ENCODE measurements at regions of chr4 and their contacts with region 1.

Region 1: DNA sequence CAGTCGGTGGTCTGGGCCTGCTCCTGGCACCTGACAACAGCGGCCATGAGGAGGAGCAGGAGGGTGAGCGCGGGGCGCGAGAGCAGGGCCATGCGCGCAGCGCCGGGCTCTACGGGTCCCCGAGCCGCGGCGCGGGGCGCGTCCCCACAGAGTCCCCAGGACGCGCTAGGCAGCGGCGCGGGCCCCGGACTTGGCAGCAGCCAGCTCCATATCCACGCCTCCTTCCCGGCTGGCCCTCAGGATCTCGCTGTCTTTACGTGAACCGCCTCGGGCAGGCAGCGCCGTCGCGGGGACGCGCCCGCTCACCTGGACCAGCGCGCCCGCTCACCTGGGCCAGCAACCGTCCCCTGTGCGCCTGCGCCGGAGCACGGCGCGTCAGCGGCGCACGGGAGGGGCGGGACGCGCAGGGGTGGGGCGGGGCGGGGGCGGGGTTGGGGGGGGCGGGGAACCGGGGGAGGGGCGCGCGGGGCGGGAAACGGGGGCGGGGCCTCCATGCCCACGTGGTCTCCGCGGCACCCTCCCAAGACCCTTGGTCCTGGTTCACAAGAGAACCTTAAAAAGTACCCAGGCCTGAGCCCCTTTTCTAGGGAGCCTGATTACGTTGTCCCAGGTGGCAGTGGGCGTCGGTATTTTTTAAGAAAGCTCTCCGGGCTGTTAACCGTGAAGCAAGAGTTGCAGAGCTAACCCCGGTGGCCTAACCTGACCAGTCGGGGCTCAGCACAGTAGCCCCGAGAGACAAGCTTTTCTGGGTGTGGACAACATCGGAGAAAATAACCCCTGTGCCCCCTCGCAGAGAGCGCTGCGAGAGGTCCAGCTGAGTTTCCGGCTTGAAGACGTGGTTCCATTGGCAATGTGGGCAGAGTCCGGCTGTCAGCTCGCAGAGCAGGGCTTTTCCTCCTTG is at the start of gene PLA2G12A:
- DNase-seq: peak; percentile 37 to 93 (median 57)

Region 2: DNA sequence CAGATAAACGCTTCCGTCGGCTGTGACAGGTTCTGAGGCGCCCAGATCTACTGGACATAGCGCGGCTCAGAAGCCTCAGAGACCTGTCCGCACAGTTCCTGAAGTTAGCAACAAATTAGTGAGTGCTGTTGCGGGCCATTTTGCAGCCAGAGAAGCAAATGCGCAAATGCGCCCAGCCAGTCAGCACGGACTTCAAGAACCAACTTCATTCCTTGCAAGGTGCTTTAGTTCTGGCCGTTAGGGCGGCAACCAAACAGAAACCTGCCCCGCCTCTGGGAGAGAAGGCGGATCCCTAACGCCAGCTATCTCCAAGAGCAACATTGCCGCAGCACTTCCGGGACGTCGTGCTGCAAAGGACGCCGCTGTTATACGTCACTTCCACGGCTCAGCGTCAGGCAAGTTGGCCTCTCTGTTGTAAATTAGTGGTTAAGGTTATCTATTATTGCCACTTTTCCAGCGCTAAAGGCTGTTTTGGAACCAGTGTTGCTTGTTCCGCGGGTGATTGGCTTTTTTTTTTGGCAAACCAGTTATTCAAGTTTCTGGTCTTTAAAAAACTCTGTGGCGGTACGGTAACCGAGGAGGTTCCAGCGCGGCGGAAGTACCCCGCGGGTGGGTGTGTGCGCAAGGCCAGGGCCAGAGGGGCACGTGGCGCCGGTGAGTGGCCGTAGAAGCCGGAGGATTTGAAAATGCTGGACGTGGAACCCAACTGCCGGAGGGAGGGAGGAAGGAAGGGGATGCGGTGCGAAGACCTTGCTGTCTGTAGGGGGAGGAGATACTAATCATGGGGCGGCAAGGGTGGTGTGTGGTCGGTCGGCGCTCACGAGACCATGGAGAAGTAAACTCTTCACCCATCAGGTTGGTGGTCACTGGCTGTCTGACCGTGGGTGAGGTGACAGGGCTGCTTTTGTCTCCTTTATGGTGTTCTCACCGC is 85.4 kb after region 1 on chr4 and contains the start of gene GAR1:
- intact Hi-C with region 1: loop called (anchors 5 kb)
- DNase-seq: peak; percentile 81 to 98 (median 89)